ENCODE measurements at regions of chr19 and their contacts with region 1.

Region 1: DNA sequence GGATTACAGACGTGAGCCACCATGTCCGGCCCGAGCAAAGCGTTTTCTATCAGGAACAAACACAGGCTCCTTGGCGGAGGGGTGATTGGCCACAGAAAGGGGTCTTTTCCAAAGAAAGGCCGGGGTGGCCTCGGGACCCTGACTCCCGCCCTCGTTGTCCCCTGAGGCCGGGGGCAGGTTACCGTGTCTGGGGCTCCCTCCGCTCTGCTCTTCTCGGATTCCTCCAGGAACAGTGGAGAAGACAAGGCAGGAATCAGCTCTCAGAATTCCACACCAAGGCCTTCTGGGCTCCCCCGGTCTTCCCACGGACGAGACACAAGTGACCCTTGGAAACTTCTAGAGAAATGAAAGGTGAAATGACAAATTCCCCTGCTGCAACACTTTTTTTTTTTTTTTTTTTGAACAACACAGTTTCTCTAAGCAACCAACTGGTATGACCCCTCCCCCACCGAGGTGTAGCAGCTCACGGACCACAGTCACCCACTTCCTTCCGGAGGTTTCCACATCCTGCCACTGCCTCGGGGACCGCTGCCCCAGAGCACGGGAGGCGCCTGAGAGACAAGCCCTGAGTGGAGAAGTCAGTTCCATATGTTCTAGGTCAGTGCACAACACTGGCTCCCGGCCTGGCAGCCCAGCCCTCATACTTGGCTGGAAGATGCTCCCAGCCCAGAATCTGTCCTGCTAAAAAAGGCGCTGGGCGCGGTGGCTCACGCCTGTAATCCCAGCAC is 11.0 kb downstream of the MOB3A start:
- DNase-seq: peak; percentile 87 to 98 (median 96)
- H3K4me3 ChIP-seq: peak overlapping the region; percentile 83
- H3K4me3 Mint-ChIP-seq: peak overlapping the region; percentile 88 to 99 (median 97)
- H3K27ac ChIP-seq: peak overlapping the region; percentile 99
- H3K27ac Mint-ChIP-seq: peak overlapping the region; percentile 94 to 100 (median 98)
- H3K4me1 ChIP-seq: peaks cover 77% of the 10 kb centered on the region
- H3K4me1 Mint-ChIP-seq: peaks cover 70 to 78% (median 75%) of the 10 kb centered on the region in 3 donors
- H3K27me3 ChIP-seq: no peaks in the 10 kb centered on the region
- H3K27me3 Mint-ChIP-seq: peaks cover 0 to 7% of the 10 kb centered on the region in 2 donors

Region 2: GRCh38 chr19:2036424-2036823 is 48.7 kb before region 1 on chr19:
- CTCF ChIA-PET with region 1: no interaction called
- POLR2A ChIA-PET with region 1: no interaction called
- DNase-seq: no peak
- H3K4me3 ChIP-seq: no peak overlapping the region
- H3K4me3 Mint-ChIP-seq: no peak overlapping the region
- H3K27ac ChIP-seq: no peak overlapping the region
- H3K27ac Mint-ChIP-seq: peak overlapping the region in 2 of 8 donors; percentile 30 to 43
- H3K4me1 ChIP-seq: peaks cover 41% of the 10 kb centered on the region
- H3K4me1 Mint-ChIP-seq: peaks cover 18 to 31% (median 22%) of the 10 kb centered on the region in 3 donors
- H3K27me3 ChIP-seq: no peaks in the 10 kb centered on the region
- H3K27me3 Mint-ChIP-seq: no peaks in the 10 kb centered on the region

Region 3: GRCh38 chr19:2096480-2097329 is 11.5 kb after region 1 on chr19 and contains the start of gene IZUMO4:
- CTCF ChIA-PET with region 1: interaction called, 40 read pairs
- POLR2A ChIA-PET with region 1: interaction called, 19 read pairs
- DNase-seq: peak; percentile 99 to 100 (median 100)
- H3K4me3 ChIP-seq: peak within 1 kb of the TSS; percentile 87
- H3K4me3 Mint-ChIP-seq: peak within 1 kb of the TSS; percentile 94 to 100 (median 96)
- H3K27ac ChIP-seq: peak within 1 kb of the TSS; percentile 85
- H3K27ac Mint-ChIP-seq: peak within 1 kb of the TSS; percentile 91 to 98 (median 96)
- H3K4me1 ChIP-seq: peaks cover 31% of the 10 kb centered on the region
- H3K4me1 Mint-ChIP-seq: peaks cover 19 to 42% (median 24%) of the 10 kb centered on the region in 3 donors
- H3K27me3 ChIP-seq: no peaks in the 10 kb centered on the region
- H3K27me3 Mint-ChIP-seq: peaks cover 0 to 4% of the 10 kb centered on the region in 2 donors
- total RNA-seq, gene IZUMO4: 8.9 to 9.7 TPM

Region 4: GRCh38 chr19:2123682-2124387 is 38.7 kb after region 1 on chr19:
- CTCF ChIA-PET with region 1: no interaction called
- POLR2A ChIA-PET with region 1: no interaction called
- DNase-seq: peak in 1 of 5 donors; percentile 12
- H3K4me3 ChIP-seq: no peak overlapping the region
- H3K4me3 Mint-ChIP-seq: no peak overlapping the region
- H3K27ac ChIP-seq: no peak overlapping the region
- H3K27ac Mint-ChIP-seq: peak overlapping the region in 1 of 8 donors; percentile 26
- H3K4me1 ChIP-seq: no peaks in the 10 kb centered on the region
- H3K4me1 Mint-ChIP-seq: no peaks in the 10 kb centered on the region
- H3K27me3 ChIP-seq: no peaks in the 10 kb centered on the region
- H3K27me3 Mint-ChIP-seq: no peaks in the 10 kb centered on the region